OCI-LY7 (cell line): ENCODE measurements at regions of chr12 and their contacts with region 1.

Region 1: DNA sequence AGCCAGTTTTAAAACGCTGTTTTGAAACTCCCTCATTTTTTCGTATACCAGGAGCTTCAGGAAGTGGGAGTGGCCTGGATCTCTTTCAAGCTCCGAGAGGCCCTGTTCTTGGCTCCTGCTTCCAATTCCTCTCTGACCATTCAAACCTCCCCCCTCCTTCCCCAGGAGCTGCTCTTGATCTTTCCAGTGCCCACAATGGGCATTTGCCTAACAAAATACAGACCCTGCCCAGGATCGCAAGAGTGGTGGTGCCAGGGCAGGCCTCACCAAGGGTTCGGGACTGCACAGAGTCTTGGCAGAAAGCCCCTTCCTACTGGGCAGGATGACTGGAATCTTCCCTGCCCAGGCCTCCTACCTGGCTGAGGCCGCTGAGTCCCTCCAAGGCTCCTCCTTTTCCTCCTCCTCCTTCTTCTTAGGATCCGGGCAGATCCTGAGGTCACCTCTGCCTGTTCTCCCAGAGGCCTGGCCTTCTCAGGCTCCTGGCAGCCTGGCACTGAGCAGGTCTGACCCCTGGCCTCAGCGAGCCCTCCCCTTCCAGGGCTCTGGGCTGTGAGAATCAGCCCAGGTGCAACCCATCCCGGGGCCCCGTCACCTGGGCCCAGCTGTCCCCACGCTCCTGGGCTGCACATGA is 46.9 kb upstream of the NOS1 start:
- DNase-seq: no peak
- H3K4me3 ChIP-seq: no peak overlapping the region
- H3K27ac ChIP-seq: no peak overlapping the region
- H3K4me1 ChIP-seq: no peaks in the 10 kb centered on the region
- CTCF ChIP-seq: no peak

Region 2: GRCh38 chr12:116687888-116688287 is 720.4 kb before region 1 on chr12:
- CTCF ChIA-PET with region 1: no interaction called
- POLR2A ChIA-PET with region 1: no interaction called
- intact Hi-C with region 1: no loop called
- DNase-seq: peak; percentile 43
- H3K4me3 ChIP-seq: no peak overlapping the region
- H3K27ac ChIP-seq: no peak overlapping the region
- H3K4me1 ChIP-seq: no peaks in the 10 kb centered on the region
- CTCF ChIP-seq: peak; percentile 76

Region 3: GRCh38 chr12:117356048-117356447 is 52.2 kb before region 1 on chr12:
- CTCF ChIA-PET with region 1: no interaction called
- POLR2A ChIA-PET with region 1: no interaction called
- intact Hi-C with region 1: no loop called
- DNase-seq: no peak
- H3K4me3 ChIP-seq: no peak overlapping the region
- H3K27ac ChIP-seq: no peak overlapping the region
- H3K4me1 ChIP-seq: no peaks in the 10 kb centered on the region
- CTCF ChIP-seq: no peak

Region 4: DNA sequence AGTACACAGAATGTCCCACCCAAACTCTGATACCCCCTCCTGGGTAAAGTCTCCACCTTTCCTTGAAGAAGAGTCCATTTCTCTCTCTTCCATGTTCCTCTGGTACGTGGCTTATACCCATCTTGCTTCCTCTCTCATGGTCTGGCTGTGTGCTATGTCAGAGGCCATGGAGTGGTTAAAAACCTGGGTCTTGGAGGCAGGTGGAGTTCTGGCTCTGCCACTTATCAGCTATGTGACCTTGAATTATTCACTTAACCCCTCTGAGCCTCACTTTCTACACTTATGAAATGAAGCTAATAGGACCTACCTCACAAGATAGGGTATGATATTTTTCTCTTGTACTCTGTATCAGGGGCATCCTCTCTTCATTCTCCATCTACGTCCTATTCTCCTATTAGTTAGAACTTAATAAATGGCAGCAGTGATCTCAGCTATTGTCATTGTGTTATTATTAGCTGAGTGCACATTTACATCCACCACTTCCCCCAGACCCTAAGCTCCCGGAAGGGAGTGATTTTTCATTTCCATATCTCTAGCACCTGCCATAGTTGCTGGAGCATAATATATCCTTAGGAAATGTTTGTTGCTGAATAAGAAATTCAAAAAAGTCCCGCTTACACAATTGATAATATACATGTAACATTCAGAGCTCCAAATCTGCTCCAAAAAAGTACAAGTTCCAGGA is 12.9 kb after region 1 on chr12:
- CTCF ChIA-PET with region 1: no interaction called
- POLR2A ChIA-PET with region 1: interaction called, 12 read pairs
- intact Hi-C with region 1: no loop called
- DNase-seq: no peak
- H3K4me3 ChIP-seq: no peak overlapping the region
- H3K27ac ChIP-seq: no peak overlapping the region
- H3K4me1 ChIP-seq: no peaks in the 10 kb centered on the region
- CTCF ChIP-seq: no peak

Region 5: DNA sequence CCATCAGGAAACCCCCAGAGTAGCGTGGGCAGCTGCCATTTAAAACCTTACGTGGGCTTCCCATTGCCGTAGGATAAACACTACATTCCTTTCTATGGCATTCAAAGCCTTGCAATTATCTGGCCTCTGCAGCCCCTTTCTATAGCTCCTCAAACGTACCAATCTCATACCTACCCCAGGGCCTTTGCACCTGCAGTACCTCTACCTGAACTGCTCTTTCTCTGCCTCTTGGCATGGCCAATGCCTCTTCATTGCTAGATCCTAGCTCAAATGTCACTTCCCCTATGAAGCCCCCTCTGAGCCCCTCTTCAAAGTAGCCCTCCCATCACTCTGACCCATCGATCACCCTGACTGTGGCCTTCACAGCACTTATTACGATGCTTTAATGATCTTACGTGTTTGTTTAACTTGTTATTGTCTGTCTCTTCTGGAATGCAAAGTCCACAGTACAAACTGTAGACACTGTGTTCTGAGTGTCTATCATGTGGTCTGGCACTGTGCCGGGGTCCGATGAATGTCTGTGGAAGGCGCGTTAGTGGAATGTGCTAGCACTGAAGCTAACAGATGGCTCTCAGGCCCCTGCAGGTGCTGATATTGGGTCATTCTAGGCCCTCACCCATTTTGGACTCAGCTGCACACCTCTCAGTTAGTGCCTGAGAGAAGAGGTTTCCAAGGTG is 110.5 kb after region 1 on chr12:
- CTCF ChIA-PET with region 1: no interaction called
- POLR2A ChIA-PET with region 1: no interaction called
- intact Hi-C with region 1: no loop called
- DNase-seq: no peak
- H3K4me3 ChIP-seq: no peak overlapping the region
- H3K27ac ChIP-seq: no peak overlapping the region
- H3K4me1 ChIP-seq: no peaks in the 10 kb centered on the region
- CTCF ChIP-seq: no peak